B cell (primary cell): ENCODE measurements at regions of chr18 and their contacts with region 1.

Region 1: DNA sequence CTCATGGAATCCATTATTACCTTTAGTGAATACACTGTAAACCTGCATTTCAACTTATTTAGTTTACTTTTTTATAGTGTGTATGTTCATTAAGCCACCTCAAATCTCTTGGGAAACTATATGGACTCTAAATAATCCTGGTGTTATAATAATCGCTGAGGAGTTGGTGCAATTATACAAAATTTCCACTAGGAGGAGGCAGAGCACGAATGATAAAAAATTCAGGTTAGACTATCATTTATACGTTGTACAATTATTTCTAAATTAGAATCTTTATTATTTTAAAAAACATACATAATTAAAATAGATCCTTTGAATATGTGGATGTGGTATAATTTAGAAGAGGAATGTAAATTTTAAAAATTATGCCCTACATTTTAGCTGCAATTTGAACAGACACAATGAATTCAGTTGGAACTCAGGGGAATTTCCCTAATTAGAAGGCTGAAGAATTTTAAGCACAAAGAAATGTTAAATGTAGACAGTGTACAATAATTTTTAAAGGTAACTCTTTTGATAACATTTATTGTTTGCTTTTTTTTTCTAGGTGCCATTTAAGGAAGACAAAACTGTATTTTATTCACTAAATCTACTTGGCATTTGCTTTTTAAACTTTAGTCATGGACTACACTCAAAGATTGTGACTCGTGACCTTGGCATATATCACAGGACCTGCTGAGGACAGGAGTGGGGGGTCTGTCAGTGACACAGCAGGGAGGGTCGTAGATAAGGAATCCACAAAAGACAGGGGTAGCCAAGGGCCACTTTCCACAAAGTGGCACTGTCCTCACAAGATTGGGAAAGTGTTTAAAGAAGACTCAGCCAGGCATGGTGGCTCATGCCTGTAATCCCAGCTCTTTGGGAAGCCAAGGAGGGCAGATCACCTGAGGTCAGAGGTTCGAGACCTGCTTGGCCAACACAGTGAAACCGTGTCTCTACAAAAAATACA is 45.5 kb downstream of the RAB12 start:
- DNase-seq: peak; percentile 52
- ATAC-seq: peak; percentile 49
- H3K4me3 ChIP-seq: no peak overlapping the region
- H3K4me3 Mint-ChIP-seq: no peak overlapping the region
- H3K27ac ChIP-seq: no peak overlapping the region
- H3K27ac Mint-ChIP-seq: no peak overlapping the region
- H3K4me1 ChIP-seq: no peaks in the 10 kb centered on the region
- H3K4me1 Mint-ChIP-seq: peaks cover 6% of the 10 kb centered on the region
- H3K27me3 ChIP-seq: no peaks in the 10 kb centered on the region
- H3K27me3 Mint-ChIP-seq: no peaks in the 10 kb centered on the region
- CTCF ChIP-seq: peak; percentile 96

Region 2: DNA sequence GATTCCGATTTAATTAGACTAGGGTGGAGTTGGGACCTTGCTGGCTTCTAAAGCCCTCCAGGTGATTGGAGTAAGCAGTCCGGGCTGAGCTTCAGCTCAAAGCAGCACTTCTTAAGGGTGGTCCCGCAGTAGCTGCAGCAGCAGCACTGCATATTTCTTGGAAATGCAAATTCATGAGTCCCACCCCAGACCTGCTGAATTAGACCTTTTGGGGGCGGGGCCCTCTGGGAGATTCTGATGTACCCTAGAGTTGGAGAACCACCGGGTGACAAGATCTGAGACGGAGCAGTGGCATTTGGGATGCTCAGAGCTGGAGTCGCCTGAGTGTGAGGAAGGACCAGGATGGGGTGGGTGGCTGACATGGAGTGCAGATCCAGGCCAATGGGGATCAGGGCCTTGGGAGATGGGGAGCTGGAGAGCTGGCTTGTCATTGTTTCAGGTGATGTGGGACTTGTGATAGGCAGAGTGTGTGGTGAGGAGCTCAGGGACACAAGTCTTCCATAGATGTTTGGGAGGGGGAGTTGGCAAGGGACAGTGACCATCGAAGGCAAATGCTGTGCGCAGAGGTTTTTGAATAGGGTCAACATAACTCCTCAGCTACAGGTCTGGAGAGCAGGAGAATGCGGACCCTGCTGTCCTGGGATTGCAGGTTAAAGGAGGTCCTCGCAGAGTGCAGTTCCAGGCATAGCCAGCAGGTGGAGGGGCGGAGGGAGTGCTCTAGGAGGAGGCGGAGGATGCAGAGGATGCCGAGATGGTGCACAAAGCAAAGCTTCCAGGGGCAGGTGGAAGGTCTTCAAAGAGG is 176.4 kb before region 1 on chr18:
- CTCF ChIA-PET with region 1: interaction called, 10 read pairs
- POLR2A ChIA-PET with region 1: no interaction called
- intact Hi-C with region 1: no loop called
- DNase-seq: peak; percentile 74
- ATAC-seq: peak; percentile 80
- H3K4me3 ChIP-seq: no peak overlapping the region
- H3K4me3 Mint-ChIP-seq: no peak overlapping the region
- H3K27ac ChIP-seq: no peak overlapping the region
- H3K27ac Mint-ChIP-seq: no peak overlapping the region
- H3K4me1 ChIP-seq: no peaks in the 10 kb centered on the region
- H3K4me1 Mint-ChIP-seq: peaks cover 3% of the 10 kb centered on the region
- H3K27me3 ChIP-seq: peaks cover 0 to 7% (median 0%) of the 10 kb centered on the region in 4 experiments
- H3K27me3 Mint-ChIP-seq: peaks cover 47% of the 10 kb centered on the region
- CTCF ChIP-seq: peak; percentile 80

Region 3: DNA sequence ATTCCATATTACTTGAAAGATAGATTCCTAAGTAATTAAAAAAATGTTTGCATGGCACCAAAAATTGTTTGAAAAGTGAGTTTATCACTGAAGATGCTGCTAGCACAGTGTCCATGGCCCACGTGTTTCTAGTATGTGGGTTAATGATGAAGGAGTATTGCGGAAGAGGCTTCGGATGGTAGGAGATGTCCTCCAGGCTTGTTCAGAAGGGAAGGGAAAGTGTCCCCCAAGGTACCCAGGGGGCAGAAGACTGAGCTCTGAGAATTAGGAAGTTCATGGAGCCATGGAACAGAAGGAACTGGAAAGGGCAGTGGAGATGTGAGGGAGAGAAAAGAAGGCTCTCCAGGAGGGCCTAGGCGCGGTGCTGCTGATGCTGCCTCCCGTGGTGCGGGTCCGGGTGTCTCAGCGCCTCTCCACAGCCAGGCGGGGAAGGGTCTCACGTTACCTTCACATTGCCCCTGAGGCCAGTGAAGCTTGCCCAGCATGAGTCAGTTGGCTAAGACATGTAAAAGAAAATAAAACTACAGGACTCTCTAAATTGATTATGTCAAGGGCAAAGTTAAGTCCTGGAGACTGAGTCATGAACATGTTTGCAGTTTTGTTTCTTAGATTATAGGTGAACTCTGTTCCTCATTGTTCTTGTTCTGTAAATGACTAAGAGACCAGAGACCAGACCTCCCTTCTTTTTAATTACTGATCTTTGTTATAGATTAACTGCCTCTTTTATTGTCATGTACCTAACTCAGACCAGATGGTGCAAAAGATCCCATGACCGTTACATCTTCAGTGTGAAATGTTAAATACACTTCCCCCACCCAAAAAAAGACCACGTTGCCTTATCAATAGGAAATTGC is 139.6 kb after region 1 on chr18:
- CTCF ChIA-PET with region 1: no interaction called
- POLR2A ChIA-PET with region 1: no interaction called
- intact Hi-C with region 1: no loop called
- DNase-seq: no peak
- ATAC-seq: no peak
- H3K4me3 ChIP-seq: no peak overlapping the region
- H3K4me3 Mint-ChIP-seq: no peak overlapping the region
- H3K27ac ChIP-seq: no peak overlapping the region
- H3K27ac Mint-ChIP-seq: no peak overlapping the region
- H3K4me1 ChIP-seq: peaks cover 0 to 4% of the 10 kb centered on the region in 2 donors
- H3K4me1 Mint-ChIP-seq: peaks cover 5% of the 10 kb centered on the region
- H3K27me3 ChIP-seq: no peaks in the 10 kb centered on the region
- H3K27me3 Mint-ChIP-seq: no peaks in the 10 kb centered on the region
- CTCF ChIP-seq: no peak

Region 4: DNA sequence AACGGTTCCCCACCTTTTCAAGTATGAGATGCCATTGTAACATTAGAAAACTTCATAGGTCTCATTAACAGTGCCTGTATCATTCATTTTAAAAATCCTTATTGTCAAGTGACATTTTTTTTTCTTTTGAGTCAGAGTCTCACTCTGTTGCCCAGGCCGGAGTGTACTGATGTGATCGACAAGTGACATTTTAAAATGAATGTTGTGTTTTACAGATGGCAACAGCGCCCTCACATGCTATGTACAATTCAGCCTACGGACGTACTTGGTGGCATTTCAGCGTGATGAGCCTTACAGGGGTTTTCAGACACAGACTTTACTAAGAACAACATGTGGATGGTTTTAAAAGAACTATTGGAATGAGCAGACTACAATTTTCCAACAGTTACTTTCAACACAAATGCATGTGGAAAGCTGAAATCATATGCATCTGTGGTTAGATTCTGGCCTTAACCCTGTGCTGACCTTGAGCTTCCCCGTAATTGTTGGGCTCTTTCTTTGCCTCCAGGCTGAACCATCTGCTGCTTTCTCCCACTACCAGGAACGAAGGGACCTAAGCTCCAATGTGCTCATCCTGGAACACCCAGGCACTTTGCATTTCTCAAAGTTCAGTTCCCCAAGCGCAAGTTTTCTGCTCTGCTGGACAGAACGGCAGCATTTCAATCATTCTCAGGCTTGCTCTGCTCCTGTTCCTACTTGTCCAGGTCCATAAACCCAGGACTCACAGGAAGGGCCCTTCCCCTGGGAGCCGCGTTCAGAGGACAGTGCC is 327.8 kb after region 1 on chr18:
- CTCF ChIA-PET with region 1: interaction called, 283 read pairs
- POLR2A ChIA-PET with region 1: no interaction called
- intact Hi-C with region 1: loop called (anchors 1 kb)
- DNase-seq: peak; percentile 74
- ATAC-seq: peak; percentile 71
- H3K4me3 ChIP-seq: no peak overlapping the region
- H3K4me3 Mint-ChIP-seq: no peak overlapping the region
- H3K27ac ChIP-seq: no peak overlapping the region
- H3K27ac Mint-ChIP-seq: peak overlapping the region; percentile 20
- H3K4me1 ChIP-seq: peaks cover 22 to 26% of the 10 kb centered on the region in 2 donors
- H3K4me1 Mint-ChIP-seq: peaks cover 27% of the 10 kb centered on the region
- H3K27me3 ChIP-seq: no peaks in the 10 kb centered on the region
- H3K27me3 Mint-ChIP-seq: no peaks in the 10 kb centered on the region
- CTCF ChIP-seq: peak; percentile 52

Region 5: DNA sequence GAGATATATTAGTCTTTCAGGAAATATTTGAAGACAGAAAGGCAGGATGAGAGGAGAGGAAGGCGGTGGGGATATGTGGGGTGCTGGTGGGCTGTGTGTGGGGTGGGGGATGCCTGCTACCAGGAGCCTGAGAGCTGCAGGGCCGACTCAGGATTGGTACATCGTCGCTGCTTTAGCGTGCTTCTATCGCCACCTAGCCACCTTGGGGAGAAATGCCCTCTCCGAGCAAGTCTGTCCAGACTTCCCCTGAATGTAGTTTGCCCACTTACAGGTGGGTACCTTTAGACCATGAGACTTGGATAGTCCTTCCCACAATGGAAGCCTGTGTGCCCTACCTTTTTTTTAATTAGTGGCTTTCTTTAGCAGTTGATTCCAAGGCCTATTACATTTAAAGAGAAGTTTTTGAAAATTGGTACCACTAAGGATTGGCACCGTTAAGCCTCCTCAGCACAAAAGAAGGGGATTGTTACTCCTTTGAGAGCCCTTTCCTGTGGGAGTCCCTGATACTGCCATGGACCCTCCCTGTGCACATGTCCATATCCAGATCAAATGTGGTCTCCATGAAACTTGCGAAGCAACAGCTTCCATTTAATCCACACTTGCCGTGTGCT is 333.6 kb after region 1 on chr18:
- CTCF ChIA-PET with region 1: interaction called, 283 read pairs
- POLR2A ChIA-PET with region 1: no interaction called
- intact Hi-C with region 1: loop called (anchors 1 kb)
- DNase-seq: peak; percentile 76
- ATAC-seq: peak; percentile 79
- H3K4me3 ChIP-seq: no peak overlapping the region
- H3K4me3 Mint-ChIP-seq: no peak overlapping the region
- H3K27ac ChIP-seq: no peak overlapping the region
- H3K27ac Mint-ChIP-seq: no peak overlapping the region
- H3K4me1 ChIP-seq: no peaks in the 10 kb centered on the region
- H3K4me1 Mint-ChIP-seq: no peaks in the 10 kb centered on the region
- H3K27me3 ChIP-seq: no peaks in the 10 kb centered on the region
- H3K27me3 Mint-ChIP-seq: peaks cover 7% of the 10 kb centered on the region
- CTCF ChIP-seq: peak; percentile 89

Region 6: DNA sequence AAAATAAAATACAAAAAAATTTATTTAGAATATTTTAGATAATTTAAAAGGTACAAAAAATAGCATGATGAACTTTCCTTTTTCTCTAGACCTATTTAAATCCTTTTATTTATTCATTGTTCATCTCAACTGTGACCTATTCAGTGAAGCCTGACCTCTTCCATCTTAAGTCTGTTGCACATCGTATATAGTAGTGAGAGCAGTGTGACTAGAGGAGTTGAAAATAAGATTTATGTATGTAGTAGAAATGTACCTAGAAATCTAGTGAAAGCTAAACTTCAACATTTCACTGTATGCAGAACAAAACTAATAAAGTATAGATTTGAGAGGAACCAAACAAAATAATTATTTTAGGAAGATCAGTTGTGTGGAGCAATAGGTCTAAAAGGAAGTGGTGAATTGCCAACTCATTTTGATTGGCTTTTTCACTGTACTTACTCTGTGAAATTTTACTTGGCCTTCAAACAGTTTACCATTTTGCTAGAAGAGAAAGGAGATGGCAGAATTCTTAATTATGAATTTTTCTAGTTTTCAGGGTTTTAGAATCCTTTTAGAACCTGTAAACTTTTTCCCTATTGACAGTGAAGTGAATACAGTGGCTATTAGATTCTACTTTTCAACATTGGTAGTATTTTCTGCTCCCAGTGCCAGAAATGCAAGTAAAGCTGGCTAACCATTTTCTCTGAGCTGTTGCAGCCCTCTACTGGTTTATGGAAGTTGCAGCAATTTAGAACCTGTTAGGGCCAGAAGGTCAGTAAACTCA is 492.8 kb after region 1 on chr18:
- CTCF ChIA-PET with region 1: interaction called, 3 read pairs
- POLR2A ChIA-PET with region 1: no interaction called
- intact Hi-C with region 1: loop called (anchors 5 kb)
- DNase-seq: peak; percentile 72
- ATAC-seq: peak; percentile 60
- H3K4me3 ChIP-seq: no peak overlapping the region
- H3K4me3 Mint-ChIP-seq: peak overlapping the region; percentile 58
- H3K27ac ChIP-seq: peak overlapping the region; percentile 35 to 48
- H3K27ac Mint-ChIP-seq: peak overlapping the region; percentile 74
- H3K4me1 ChIP-seq: peaks cover 63 to 68% of the 10 kb centered on the region in 2 donors
- H3K4me1 Mint-ChIP-seq: peaks cover 72% of the 10 kb centered on the region
- H3K27me3 ChIP-seq: no peaks in the 10 kb centered on the region
- H3K27me3 Mint-ChIP-seq: no peaks in the 10 kb centered on the region
- CTCF ChIP-seq: peak; percentile 76

Region 7: GRCh38 chr18:9516437-9517064 is 861.8 kb after region 1 on chr18:
- CTCF ChIA-PET with region 1: interaction called, 8 read pairs
- POLR2A ChIA-PET with region 1: no interaction called
- intact Hi-C with region 1: loop called (anchors 10 kb)
- DNase-seq: peak; percentile 61
- ATAC-seq: peak; percentile 58
- H3K4me3 ChIP-seq: no peak overlapping the region
- H3K4me3 Mint-ChIP-seq: no peak overlapping the region
- H3K27ac ChIP-seq: no peak overlapping the region
- H3K27ac Mint-ChIP-seq: no peak overlapping the region
- H3K4me1 ChIP-seq: no peaks in the 10 kb centered on the region
- H3K4me1 Mint-ChIP-seq: no peaks in the 10 kb centered on the region
- H3K27me3 ChIP-seq: no peaks in the 10 kb centered on the region
- H3K27me3 Mint-ChIP-seq: no peaks in the 10 kb centered on the region
- CTCF ChIP-seq: peak; percentile 98